PC-3 (cell line): ENCODE measurements at regions of chr14 and their contacts with region 1.

Region 1: GRCh38 chr14:90235179-90235976 is 21.0 kb upstream of the PSMC1 start:
- DNase-seq: peak; percentile 83
- ATAC-seq: peak; percentile 94
- H3K4me3 ChIP-seq: no peak overlapping the region
- H3K27ac ChIP-seq: no peak overlapping the region
- H3K4me1 ChIP-seq: no peaks in the 10 kb centered on the region; the same call in 1 of the 2 replicates
- H3K27me3 ChIP-seq: no peaks in the 10 kb centered on the region
- CTCF ChIP-seq: peak; percentile 88

Region 2: DNA sequence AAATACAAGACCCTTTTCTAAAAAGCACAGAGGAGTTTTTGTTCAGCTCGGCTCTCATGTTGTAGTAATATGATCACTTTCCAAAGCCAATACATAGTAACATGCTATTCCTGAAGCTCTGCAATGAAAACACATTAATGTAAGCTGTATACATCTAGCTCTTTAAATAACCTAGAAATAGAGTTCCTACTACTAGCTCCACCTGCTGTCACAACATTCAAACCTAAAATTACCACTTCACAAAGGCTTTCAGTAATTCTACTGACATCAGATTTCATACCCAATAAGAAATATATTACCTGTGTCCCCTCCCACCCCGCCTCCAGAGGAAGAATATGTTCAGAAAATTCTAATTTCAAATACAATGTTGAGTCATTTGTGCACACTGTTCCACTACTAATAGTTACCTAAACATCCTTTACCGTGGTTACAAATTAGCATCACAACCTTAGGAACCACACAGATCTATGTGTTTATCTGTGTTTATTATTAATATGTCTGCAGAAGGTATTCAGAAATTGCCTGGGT is 298.7 kb before region 1 on chr14:
- CTCF ChIA-PET with region 1: no interaction called
- POLR2A ChIA-PET with region 1: no interaction called
- intact Hi-C with region 1: loop called (anchors 1 kb)
- DNase-seq: peak; percentile 26
- ATAC-seq: peak; percentile 64
- H3K4me3 ChIP-seq: no peak overlapping the region
- H3K27ac ChIP-seq: no peak overlapping the region
- H3K4me1 ChIP-seq: no peaks in the 10 kb centered on the region
- H3K27me3 ChIP-seq: no peaks in the 10 kb centered on the region
- CTCF ChIP-seq: peak; percentile 46

Region 3: DNA sequence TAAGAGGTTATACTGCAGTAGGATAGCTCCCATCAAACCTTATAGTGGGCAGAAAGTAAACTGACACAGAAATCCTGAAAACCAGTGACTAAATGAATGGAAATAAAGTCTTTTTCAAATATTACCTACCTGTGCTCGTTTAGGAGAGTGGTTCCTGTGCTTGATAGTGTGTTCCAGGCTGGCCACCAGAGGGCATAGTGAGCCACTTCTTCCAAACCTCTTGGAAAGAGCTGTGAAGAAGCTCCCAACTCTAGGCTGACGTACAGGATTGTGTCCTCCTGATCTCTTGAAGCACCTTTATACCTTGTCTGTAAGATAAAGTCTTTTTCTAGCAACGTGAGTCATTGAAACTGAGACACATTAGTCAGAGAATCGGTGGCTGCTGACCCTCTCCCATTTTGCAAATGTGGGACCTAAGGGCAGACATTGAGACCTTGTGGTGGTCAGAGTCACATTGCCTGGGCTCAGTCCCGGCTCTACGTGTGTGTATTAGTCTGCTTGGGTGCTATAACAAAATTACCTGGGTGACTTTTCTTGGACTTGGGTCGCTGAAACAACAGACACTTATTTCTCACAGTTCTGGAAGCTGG is 262.0 kb before region 1 on chr14:
- CTCF ChIA-PET with region 1: interaction called, 7 read pairs
- POLR2A ChIA-PET with region 1: no interaction called
- intact Hi-C with region 1: loop called (anchors 1 kb)
- DNase-seq: peak; percentile 72
- ATAC-seq: peak; percentile 93
- H3K4me3 ChIP-seq: no peak overlapping the region
- H3K27ac ChIP-seq: no peak overlapping the region
- H3K4me1 ChIP-seq: no peaks in the 10 kb centered on the region
- H3K27me3 ChIP-seq: no peaks in the 10 kb centered on the region
- CTCF ChIP-seq: peak; percentile 90

Region 4: DNA sequence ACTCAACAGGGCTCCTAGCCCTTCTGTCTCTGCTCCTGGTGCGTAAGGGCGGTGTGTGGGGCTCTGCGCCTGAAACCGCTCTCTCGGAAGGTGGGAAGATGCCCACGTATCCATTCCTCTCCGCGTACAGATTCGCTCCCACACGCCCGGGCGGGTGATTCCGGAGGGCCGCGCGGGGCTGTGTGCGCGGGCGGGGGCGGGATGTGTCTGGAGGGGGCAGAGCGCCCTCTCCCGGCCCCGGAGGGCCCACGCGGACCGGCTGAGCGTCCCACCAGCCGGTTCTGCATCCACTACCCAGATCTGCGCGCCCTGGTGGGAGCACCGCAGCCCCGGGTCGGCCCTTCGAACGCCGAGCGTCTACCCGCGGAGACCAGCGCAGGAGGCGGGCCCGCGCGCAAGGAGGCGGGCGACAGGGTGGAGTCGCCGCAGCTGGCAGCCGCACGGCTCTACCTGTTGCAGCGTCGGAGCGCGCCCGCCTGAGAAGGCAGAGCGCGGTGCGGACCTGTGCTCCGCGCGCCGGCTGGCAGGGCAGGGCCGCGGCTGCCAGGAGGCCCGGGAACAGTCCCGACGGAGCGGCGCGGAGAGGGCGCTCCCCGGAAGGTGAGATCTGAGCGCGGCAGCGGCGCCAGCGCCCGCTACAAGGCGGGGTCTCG is 174.9 kb before region 1 on chr14:
- CTCF ChIA-PET with region 1: no interaction called
- POLR2A ChIA-PET with region 1: no interaction called
- intact Hi-C with region 1: loop called (anchors 1 kb)
- DNase-seq: peak; percentile 65
- ATAC-seq: peak; percentile 73
- H3K4me3 ChIP-seq: peak overlapping the region; percentile 69
- H3K27ac ChIP-seq: no peak overlapping the region
- H3K4me1 ChIP-seq: peaks cover 7% of the 10 kb centered on the region; the same call in 1 of the 2 replicates
- H3K27me3 ChIP-seq: peaks cover 17% of the 10 kb centered on the region
- CTCF ChIP-seq: peak; percentile 67

Region 5: GRCh38 chr14:90114550-90114949 is 120.8 kb before region 1 on chr14:
- CTCF ChIA-PET with region 1: interaction called, 5 read pairs
- POLR2A ChIA-PET with region 1: no interaction called
- intact Hi-C with region 1: loop called (anchors 2 kb)
- DNase-seq: no peak
- ATAC-seq: no peak
- H3K4me3 ChIP-seq: no peak overlapping the region
- H3K27ac ChIP-seq: no peak overlapping the region
- H3K4me1 ChIP-seq: peaks cover 38% of the 10 kb centered on the region
- H3K27me3 ChIP-seq: no peaks in the 10 kb centered on the region
- CTCF ChIP-seq: peak; percentile 29; the same call in 1 of the 2 replicates

Region 6: GRCh38 chr14:90274808-90275457 is 39.6 kb after region 1 on chr14:
- CTCF ChIA-PET with region 1: no interaction called
- POLR2A ChIA-PET with region 1: no interaction called
- intact Hi-C with region 1: no loop called
- DNase-seq: no peak
- ATAC-seq: no peak
- H3K4me3 ChIP-seq: no peak overlapping the region
- H3K27ac ChIP-seq: no peak overlapping the region
- H3K4me1 ChIP-seq: no peaks in the 10 kb centered on the region
- H3K27me3 ChIP-seq: no peaks in the 10 kb centered on the region
- CTCF ChIP-seq: no peak

Region 7: GRCh38 chr14:90518941-90519256 is 283.5 kb after region 1 on chr14:
- CTCF ChIA-PET with region 1: no interaction called
- POLR2A ChIA-PET with region 1: no interaction called
- intact Hi-C with region 1: no loop called
- DNase-seq: peak; percentile 52
- ATAC-seq: no peak
- H3K4me3 ChIP-seq: no peak overlapping the region
- H3K27ac ChIP-seq: no peak overlapping the region
- H3K4me1 ChIP-seq: peaks cover 19% of the 10 kb centered on the region
- H3K27me3 ChIP-seq: no peaks in the 10 kb centered on the region
- CTCF ChIP-seq: peak; percentile 89